ENCODE measurements at regions of chr12 and their contacts with region 1.

Region 1: GRCh38 chr12:116559162-116559935 is at the start of gene MAP1LC3B2:
- DNase-seq: peak; percentile 97
- H3K4me3 ChIP-seq: peak within 1 kb of the TSS; percentile 59
- H3K27ac ChIP-seq: peak within 1 kb of the TSS; percentile 96
- H3K4me1 ChIP-seq: peaks cover 39% of the 10 kb centered on the region
- CTCF ChIP-seq: no peak
- total RNA-seq, gene MAP1LC3B2: not detected in 2 replicates

Region 2: GRCh38 chr12:116277393-116278278 is 281.7 kb before region 1 on chr12 and contains the start of gene MED13L:
- CTCF ChIA-PET with region 1: no interaction called
- POLR2A ChIA-PET with region 1: interaction called, 3 read pairs
- intact Hi-C with region 1: loop called (anchors 2 kb)
- DNase-seq: peak; percentile 93
- H3K4me3 ChIP-seq: peak within 1 kb of the TSS; percentile 77
- H3K27ac ChIP-seq: no peak within 1 kb of the TSS
- H3K4me1 ChIP-seq: peaks cover 15% of the 10 kb centered on the region
- CTCF ChIP-seq: no peak; the same call in 1 of the 2 replicates
- total RNA-seq, gene MED13L: 20.1 and 25.7 TPM in 2 replicates

Region 3: GRCh38 chr12:116346741-116347140 is 212.6 kb before region 1 on chr12:
- CTCF ChIA-PET with region 1: no interaction called
- POLR2A ChIA-PET with region 1: no interaction called
- intact Hi-C with region 1: no loop called
- DNase-seq: no peak
- H3K4me3 ChIP-seq: no peak overlapping the region
- H3K27ac ChIP-seq: no peak overlapping the region
- H3K4me1 ChIP-seq: no peaks in the 10 kb centered on the region
- CTCF ChIP-seq: no peak

Region 4: DNA sequence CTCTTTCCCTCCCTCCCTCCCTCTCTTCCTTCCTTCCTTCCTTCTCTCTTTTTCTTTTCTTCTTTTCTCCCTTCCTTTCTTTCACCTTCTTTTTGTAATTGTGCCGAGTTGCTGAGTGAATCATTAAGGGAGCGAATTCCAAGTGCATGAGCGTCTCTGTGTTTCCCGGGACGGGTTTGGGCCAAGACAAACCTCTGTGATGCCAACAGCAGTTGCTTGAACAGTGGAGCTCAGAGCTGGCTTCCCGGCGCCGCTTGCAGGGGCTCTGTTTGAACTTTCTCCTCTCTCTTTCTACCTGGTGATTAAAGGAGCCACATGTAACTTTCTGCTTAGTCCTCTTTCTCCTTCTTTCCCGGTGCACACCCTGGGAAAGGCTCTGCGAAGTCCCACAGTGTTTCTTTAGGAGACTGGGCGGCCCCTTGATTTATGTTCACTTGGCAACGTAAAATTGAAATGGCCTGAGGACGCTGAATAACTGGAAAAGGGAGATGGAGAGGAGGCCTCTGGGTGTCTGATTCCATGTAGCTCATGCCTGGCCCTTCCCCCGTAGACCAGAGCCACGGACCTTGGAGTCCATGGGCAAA is 33.8 kb before region 1 on chr12:
- CTCF ChIA-PET with region 1: no interaction called
- POLR2A ChIA-PET with region 1: no interaction called
- intact Hi-C with region 1: no loop called
- DNase-seq: no peak
- H3K4me3 ChIP-seq: no peak overlapping the region
- H3K27ac ChIP-seq: no peak overlapping the region
- H3K4me1 ChIP-seq: no peaks in the 10 kb centered on the region
- CTCF ChIP-seq: no peak

Region 5: DNA sequence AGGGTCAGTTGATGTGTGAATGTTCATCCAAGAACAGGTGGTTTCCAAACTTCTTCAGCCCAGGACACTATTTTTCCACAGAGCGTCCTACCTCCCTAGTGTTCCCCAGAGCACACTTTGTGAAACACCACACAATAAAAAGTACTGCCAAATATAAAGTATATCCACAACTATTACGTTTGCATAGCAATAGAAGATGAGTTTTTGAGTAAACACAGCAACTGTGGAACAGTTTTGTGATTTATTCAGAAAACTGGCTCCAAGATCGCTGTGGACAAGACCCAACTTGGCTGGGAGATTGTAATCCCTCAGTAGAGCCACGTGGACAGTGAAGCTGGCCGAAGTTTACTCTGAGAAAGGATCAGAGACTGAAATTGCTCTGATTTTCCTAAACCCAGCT is 14.7 kb before region 1 on chr12:
- CTCF ChIA-PET with region 1: no interaction called
- POLR2A ChIA-PET with region 1: interaction called, 11 read pairs
- intact Hi-C with region 1: no loop called
- DNase-seq: no peak
- H3K4me3 ChIP-seq: no peak overlapping the region
- H3K27ac ChIP-seq: no peak overlapping the region
- H3K4me1 ChIP-seq: peaks cover 17% of the 10 kb centered on the region
- CTCF ChIP-seq: no peak

Region 6: DNA sequence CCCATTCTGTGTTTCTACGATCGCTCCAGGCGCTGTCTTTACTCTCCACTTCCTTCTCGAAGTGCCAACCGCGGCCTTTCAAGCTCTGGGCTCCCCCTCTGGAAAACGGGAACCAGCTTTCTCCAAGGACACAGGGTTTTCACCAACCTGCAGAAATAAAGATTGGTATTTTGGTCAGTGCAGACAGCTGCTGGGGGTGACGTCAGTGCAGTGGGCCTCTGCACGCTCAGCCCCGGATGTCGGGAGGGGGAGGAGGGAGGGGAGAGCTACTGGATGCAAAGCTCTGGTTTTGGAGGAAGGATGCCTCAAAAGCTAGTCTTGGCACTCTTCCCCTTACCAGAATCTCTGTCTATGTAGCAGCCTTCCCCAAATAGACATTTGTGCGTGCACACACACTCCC is 302.0 kb after region 1 on chr12:
- CTCF ChIA-PET with region 1: no interaction called
- POLR2A ChIA-PET with region 1: no interaction called
- intact Hi-C with region 1: loop called (anchors 2 kb)
- DNase-seq: peak; percentile 92
- H3K4me3 ChIP-seq: peak overlapping the region; percentile 54
- H3K27ac ChIP-seq: peak overlapping the region; percentile 91
- H3K4me1 ChIP-seq: peaks cover 80% of the 10 kb centered on the region
- CTCF ChIP-seq: no peak

Measured in OCI-LY7 (cell line).